MCF 10A (cell line): ENCODE measurements at regions of chr11 and their contacts with region 1.

Region 1: GRCh38 chr11:506238-506994 is 626 bp downstream of the RNH1 start:
- DNase-seq: peak; percentile 95
- H3K4me3 Mint-ChIP-seq: peak overlapping the region; percentile 95
- H3K27ac Mint-ChIP-seq: peak overlapping the region; percentile 99
- H3K4me1 Mint-ChIP-seq: peaks cover 6% of the 10 kb centered on the region
- H3K27me3 Mint-ChIP-seq: no peaks in the 10 kb centered on the region
- CTCF ChIP-seq: no peak

Region 2: DNA sequence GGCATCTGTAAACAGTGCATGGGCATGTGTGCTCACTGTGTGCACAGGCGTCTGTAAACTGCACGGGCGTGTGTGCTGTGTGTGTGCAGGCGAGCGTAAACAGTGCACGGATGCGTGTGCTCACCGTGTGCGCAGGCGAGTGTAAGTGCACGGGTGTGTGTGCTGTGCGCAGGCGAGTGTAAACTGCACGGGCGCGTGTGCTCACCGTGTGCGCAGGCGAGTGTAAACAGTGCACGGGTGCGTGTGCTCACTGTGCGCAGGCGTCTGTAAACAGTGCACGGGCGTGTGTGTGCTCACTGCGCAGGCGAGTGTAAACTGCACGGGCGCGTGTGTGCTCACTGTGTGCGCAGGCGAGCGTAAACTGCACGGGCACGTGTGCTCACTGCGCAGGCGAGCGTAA is 21.8 kb before region 1 on chr11:
- CTCF ChIA-PET with region 1: no interaction called
- POLR2A ChIA-PET with region 1: no interaction called
- intact Hi-C with region 1: no loop called
- DNase-seq: no peak
- H3K4me3 Mint-ChIP-seq: no peak overlapping the region
- H3K27ac Mint-ChIP-seq: no peak overlapping the region
- H3K4me1 Mint-ChIP-seq: no peaks in the 10 kb centered on the region
- H3K27me3 Mint-ChIP-seq: no peaks in the 10 kb centered on the region
- CTCF ChIP-seq: no peak

Region 3: GRCh38 chr11:518463-519250 is 12.2 kb after region 1 on chr11:
- CTCF ChIA-PET with region 1: interaction called, 34 read pairs
- POLR2A ChIA-PET with region 1: interaction called, 81 read pairs
- intact Hi-C with region 1: loop called (anchors 1 kb)
- DNase-seq: peak; percentile 98
- H3K4me3 Mint-ChIP-seq: peak overlapping the region; percentile 60
- H3K27ac Mint-ChIP-seq: peak overlapping the region; percentile 85
- H3K4me1 Mint-ChIP-seq: peaks cover 10% of the 10 kb centered on the region
- H3K27me3 Mint-ChIP-seq: no peaks in the 10 kb centered on the region
- CTCF ChIP-seq: peak; percentile 98